PC-9 (cell line): ENCODE measurements at regions of chr12 and their contacts with region 1.

Region 1: GRCh38 chr12:63888908-63889635 is 44.6 kb downstream of the SRGAP1 start:
- DNase-seq: no peak
- H3K4me3 ChIP-seq: no peak overlapping the region
- H3K27ac ChIP-seq: no peak overlapping the region
- H3K4me1 ChIP-seq: no peaks in the 10 kb centered on the region
- H3K27me3 ChIP-seq: no peaks in the 10 kb centered on the region
- CTCF ChIP-seq: no peak

Region 2: GRCh38 chr12:63930971-63931370 is 41.9 kb after region 1 on chr12:
- CTCF ChIA-PET with region 1: no interaction called
- POLR2A ChIA-PET with region 1: no interaction called
- intact Hi-C with region 1: no loop called
- DNase-seq: no peak
- H3K4me3 ChIP-seq: no peak overlapping the region
- H3K27ac ChIP-seq: no peak overlapping the region
- H3K4me1 ChIP-seq: peaks cover 21% of the 10 kb centered on the region
- H3K27me3 ChIP-seq: no peaks in the 10 kb centered on the region
- CTCF ChIP-seq: no peak

Region 3: DNA sequence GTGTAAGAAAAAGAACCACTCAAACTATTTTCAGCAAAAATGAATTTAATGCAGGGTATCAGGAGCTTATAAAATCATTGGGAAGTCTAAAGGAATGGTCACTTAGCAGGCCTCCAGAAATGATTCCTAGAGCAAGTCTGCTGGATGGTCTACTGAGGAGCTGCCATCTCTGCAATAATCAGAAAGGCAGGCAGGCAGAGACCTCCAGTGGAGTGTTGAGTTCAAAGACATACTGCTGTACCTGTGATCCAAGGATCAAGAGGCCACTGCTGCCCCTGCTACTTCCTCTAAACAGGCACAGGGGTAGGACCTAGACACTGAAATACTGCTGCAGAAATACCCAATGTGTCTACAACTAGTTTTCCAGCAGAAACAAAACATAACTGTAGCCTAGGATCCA is 347.5 kb after region 1 on chr12:
- CTCF ChIA-PET with region 1: no interaction called
- POLR2A ChIA-PET with region 1: interaction called, 11 read pairs
- intact Hi-C with region 1: no loop called
- DNase-seq: no peak
- H3K4me3 ChIP-seq: no peak overlapping the region
- H3K27ac ChIP-seq: no peak overlapping the region
- H3K4me1 ChIP-seq: no peaks in the 10 kb centered on the region
- H3K27me3 ChIP-seq: no peaks in the 10 kb centered on the region
- CTCF ChIP-seq: no peak